Activated CD4-positive, alpha-beta memory T cell treated with anti-CD3 and anti-CD28 coated beads for 36 hours (primary cell): ENCODE measurements at regions of chr10 and their contacts with region 1.

Region 1: GRCh38 chr10:76984559-76985443 is 652.8 kb downstream of the KCNMA1 start:
- DNase-seq: peak; percentile 67
- H3K4me3 Mint-ChIP-seq: no peak overlapping the region
- H3K27ac Mint-ChIP-seq: no peak overlapping the region
- H3K4me1 Mint-ChIP-seq: no peaks in the 10 kb centered on the region
- H3K27me3 Mint-ChIP-seq: no peaks in the 10 kb centered on the region

Region 2: GRCh38 chr10:77111611-77112550 is 127.1 kb after region 1 on chr10:
- CTCF ChIA-PET with region 1: no interaction called
- POLR2A ChIA-PET with region 1: no interaction called
- intact Hi-C with region 1: loop called (anchors 10 kb)
- DNase-seq: no peak
- H3K4me3 Mint-ChIP-seq: no peak overlapping the region
- H3K27ac Mint-ChIP-seq: no peak overlapping the region
- H3K4me1 Mint-ChIP-seq: no peaks in the 10 kb centered on the region
- H3K27me3 Mint-ChIP-seq: no peaks in the 10 kb centered on the region

Region 3: GRCh38 chr10:77582710-77583115 is 597.9 kb after region 1 on chr10:
- CTCF ChIA-PET with region 1: no interaction called
- POLR2A ChIA-PET with region 1: no interaction called
- intact Hi-C with region 1: no loop called
- DNase-seq: peak; percentile 22
- H3K4me3 Mint-ChIP-seq: no peak overlapping the region
- H3K27ac Mint-ChIP-seq: no peak overlapping the region
- H3K4me1 Mint-ChIP-seq: no peaks in the 10 kb centered on the region
- H3K27me3 Mint-ChIP-seq: no peaks in the 10 kb centered on the region